ENCODE measurements at regions of chrX and their contacts with region 1.

Region 1: DNA sequence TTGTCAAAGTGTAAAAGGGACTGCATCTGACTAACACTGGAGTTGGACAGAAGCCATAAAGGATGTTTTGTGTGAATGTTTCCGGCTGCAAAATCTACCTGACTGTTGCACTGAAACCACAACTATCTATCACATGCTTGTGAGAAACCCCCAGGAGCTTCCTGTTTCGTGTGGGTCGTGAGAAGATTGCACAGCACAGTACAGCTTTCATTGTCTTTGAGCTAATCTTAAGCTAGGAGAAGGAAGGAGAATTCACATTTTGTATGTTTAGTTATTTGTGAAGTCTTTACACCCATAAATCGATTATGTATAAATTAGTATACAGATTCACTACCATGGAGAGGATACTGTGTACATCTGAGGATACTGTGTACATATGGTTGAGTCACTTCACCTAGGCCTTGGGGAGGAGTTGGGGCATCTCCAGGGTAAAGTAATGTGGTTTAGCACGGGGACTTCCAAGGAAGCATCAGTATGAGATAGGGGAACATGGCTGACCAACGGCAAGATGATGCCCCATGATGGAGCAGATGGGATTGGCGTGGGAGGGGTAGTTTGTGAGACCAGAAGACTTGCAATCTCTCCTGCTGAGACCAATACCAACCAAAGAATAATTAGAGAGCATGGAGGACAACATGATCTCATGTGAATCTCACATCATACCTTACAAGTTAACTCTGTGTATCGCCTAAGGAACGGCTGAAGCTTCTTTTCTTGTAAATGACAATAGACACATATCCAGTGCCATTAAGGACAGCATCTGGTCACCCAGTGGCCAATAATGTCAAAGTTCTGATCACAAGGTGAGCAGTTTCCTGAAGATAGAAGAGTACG is 43.1 kb upstream of the FAM9C start:
- DNase-seq: peak; percentile 69
- ATAC-seq: peak; percentile 66
- H3K4me3 Mint-ChIP-seq: peak overlapping the region; percentile 69
- H3K27ac Mint-ChIP-seq: peak overlapping the region; percentile 92
- H3K4me1 Mint-ChIP-seq: peaks cover 88% of the 10 kb centered on the region
- H3K27me3 Mint-ChIP-seq: no peaks in the 10 kb centered on the region

Region 2: DNA sequence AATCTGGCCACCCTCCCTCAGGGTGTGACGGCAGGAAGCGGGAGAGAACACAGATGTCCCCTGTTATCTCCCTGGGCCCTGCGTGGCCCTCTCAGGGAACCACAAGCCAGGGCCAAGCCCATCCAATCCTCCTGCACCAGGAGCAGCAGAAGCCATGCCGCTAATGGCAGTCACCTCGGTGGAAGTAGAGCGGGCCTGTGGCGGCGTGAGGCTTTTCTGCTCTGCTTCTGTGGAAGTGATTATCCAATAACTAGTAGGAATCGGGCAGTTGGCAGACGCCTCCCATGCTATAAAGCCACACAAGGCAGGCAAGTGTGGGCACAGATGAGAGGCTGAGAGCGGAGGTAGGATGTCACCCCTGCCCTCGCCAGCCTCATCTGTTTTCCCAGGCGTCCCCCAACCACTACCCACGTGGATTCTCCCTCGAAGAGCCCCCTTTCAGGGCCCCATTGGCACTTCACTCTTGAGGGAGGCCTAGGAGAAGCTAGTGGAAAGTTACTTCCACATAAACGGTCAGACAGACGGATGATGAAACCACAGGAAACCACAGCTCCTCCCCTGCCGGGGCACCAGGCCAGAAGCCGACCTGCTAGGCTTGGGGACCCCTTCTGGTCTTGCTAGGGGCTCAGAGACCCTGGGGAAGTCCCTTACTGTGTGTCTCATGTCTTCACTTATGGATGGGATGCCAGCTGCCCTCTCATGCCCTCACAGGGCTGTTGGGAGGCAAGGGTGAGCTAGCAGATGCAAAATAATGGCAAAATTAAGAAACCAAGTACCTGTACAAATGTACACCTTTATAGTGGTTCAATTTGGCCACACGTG is 131.4 kb before region 1 on chrX:
- CTCF ChIA-PET with region 1: interaction called, 28 read pairs
- POLR2A ChIA-PET with region 1: interaction called, 4 read pairs
- intact Hi-C with region 1: loop called (anchors 1 to 2 kb)
- DNase-seq: peak; percentile 80
- ATAC-seq: peak; percentile 31
- H3K4me3 Mint-ChIP-seq: peak overlapping the region; percentile 82
- H3K27ac Mint-ChIP-seq: peak overlapping the region; percentile 96
- H3K4me1 Mint-ChIP-seq: peaks cover 75% of the 10 kb centered on the region
- H3K27me3 Mint-ChIP-seq: no peaks in the 10 kb centered on the region

Region 3: DNA sequence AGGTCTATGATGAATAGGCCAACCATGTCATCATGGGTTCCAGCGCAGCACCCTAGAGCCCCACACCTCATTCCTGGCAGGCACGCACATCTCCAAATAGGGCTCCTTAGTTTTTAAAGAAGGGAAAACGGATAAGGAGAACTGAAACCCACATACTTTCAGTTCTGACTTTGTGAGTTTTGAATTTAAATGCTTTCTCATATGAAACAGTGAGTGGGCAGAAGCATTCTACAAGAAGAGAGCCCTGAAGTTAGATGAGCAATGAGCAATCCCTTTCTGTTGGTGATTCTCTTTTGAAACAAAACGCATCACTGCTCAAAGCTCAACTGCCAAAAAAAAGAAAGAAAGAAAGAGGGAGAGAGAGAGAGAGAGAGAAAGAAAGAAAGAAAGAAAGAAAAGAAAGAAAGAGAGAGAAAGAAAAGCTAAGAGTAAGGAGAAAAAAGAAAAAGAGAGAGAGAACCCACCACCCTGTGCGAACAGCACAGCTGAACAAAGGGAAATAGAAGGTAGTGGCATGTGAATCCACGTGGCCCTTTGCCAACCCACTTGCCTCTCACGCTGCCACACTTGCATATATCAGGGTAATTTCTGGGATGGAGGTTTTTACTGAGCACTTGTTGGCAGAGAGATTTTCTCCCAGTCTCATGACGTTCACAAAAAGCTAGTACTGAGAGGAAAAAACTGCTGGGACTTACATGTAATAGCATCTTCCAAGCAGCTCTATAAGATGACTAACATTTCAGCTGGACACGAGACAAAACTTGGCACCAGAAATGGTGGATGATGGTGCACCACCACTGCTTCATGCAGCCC is 81.7 kb before region 1 on chrX:
- CTCF ChIA-PET with region 1: interaction called, 5 read pairs
- POLR2A ChIA-PET with region 1: interaction called, 5 read pairs
- intact Hi-C with region 1: loop called in 1 of 2 experiments (anchors 1 kb)
- DNase-seq: peak; percentile 44
- ATAC-seq: peak; percentile 62
- H3K4me3 Mint-ChIP-seq: peak overlapping the region; percentile 72
- H3K27ac Mint-ChIP-seq: peak overlapping the region; percentile 100
- H3K4me1 Mint-ChIP-seq: peaks cover 69% of the 10 kb centered on the region
- H3K27me3 Mint-ChIP-seq: no peaks in the 10 kb centered on the region

Region 4: GRCh38 chrX:13263560-13264251 is 176.2 kb after region 1 on chrX:
- CTCF ChIA-PET with region 1: no interaction called
- POLR2A ChIA-PET with region 1: no interaction called
- intact Hi-C with region 1: loop called in 1 of 2 experiments (anchors 10 kb)
- DNase-seq: no peak
- ATAC-seq: peak; percentile 49
- H3K4me3 Mint-ChIP-seq: no peak overlapping the region
- H3K27ac Mint-ChIP-seq: no peak overlapping the region
- H3K4me1 Mint-ChIP-seq: peaks cover 12% of the 10 kb centered on the region
- H3K27me3 Mint-ChIP-seq: no peaks in the 10 kb centered on the region

Region 5: DNA sequence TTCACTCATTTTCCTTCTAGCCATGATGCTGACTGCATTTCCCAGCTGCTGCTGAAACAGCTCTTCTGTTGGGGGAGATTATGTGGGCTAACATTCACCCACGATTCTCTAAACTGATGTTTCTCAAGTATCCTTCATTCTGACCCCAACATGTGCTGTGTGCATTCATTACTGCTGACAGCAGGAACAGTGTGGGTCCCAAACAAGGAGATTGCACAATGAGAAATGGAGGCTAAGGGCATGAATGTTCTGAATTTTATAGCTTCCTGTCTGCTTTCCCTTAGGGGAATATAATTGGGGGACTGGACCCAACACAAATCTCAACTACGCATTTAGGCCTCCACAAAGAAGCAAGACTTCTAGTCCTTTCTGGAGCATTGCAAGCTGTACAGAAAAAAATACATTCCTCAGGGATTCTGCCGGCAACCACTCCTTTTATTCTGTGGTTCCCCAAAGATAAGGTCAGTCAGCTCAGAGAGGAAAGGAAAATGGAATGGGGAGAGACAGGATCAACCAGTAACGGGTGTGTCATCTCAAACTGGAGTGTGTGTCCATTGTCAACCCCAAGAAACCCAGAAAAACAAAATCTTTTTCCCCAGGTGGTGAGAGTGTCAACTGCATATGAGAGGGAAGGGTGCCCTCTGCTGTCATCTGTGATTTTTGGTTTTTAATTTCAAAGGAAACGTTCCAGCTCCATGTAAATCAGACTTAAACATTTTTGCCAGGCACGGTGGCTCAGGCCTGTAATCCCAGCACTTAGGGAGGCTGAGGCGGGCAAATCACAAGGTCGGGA is 400.4 kb after region 1 on chrX:
- CTCF ChIA-PET with region 1: interaction called, 9 read pairs
- POLR2A ChIA-PET with region 1: interaction called, 3 read pairs
- intact Hi-C with region 1: loop called (anchors 1 kb)
- DNase-seq: peak; percentile 50
- ATAC-seq: peak; percentile 86
- H3K4me3 Mint-ChIP-seq: no peak overlapping the region
- H3K27ac Mint-ChIP-seq: peak overlapping the region; percentile 74
- H3K4me1 Mint-ChIP-seq: peaks cover 18% of the 10 kb centered on the region
- H3K27me3 Mint-ChIP-seq: no peaks in the 10 kb centered on the region

Region 6: GRCh38 chrX:13734278-13735172 is 647.0 kb after region 1 on chrX and contains the starts of genes OFD1 and TRAPPC2:
- CTCF ChIA-PET with region 1: no interaction called
- POLR2A ChIA-PET with region 1: no interaction called
- intact Hi-C with region 1: loop called in 1 of 2 experiments (anchors 10 kb)
- DNase-seq: peak; percentile 93
- ATAC-seq: peak; percentile 95
- H3K4me3 Mint-ChIP-seq: peak within 1 kb of the TSS; percentile 81
- H3K27ac Mint-ChIP-seq: peak within 1 kb of the TSS; percentile 93
- H3K4me1 Mint-ChIP-seq: peaks cover 42% of the 10 kb centered on the region
- H3K27me3 Mint-ChIP-seq: no peaks in the 10 kb centered on the region
- total RNA-seq, gene OFD1: 28.0 to 32.4 TPM
- total RNA-seq, gene TRAPPC2: 10.3 to 16.4 TPM

Measured in activated CD4-positive, alpha-beta T cell treated with anti-CD3 and anti-CD28 coated beads for 36 hours (primary cell).